Right cardiac atrium (tissue), 5 donors: ENCODE measurements at regions of chr3 and their contacts with region 1.

Region 1: GRCh38 chr3:191388823-191389222 is 58.5 kb upstream of the UTS2B start:
- DNase-seq: no peak
- ATAC-seq: no peak
- H3K4me3 ChIP-seq: no peak overlapping the region
- H3K27ac ChIP-seq: no peak overlapping the region
- H3K4me1 ChIP-seq: no peaks in the 10 kb centered on the region
- H3K27me3 ChIP-seq: no peaks in the 10 kb centered on the region

Region 2: DNA sequence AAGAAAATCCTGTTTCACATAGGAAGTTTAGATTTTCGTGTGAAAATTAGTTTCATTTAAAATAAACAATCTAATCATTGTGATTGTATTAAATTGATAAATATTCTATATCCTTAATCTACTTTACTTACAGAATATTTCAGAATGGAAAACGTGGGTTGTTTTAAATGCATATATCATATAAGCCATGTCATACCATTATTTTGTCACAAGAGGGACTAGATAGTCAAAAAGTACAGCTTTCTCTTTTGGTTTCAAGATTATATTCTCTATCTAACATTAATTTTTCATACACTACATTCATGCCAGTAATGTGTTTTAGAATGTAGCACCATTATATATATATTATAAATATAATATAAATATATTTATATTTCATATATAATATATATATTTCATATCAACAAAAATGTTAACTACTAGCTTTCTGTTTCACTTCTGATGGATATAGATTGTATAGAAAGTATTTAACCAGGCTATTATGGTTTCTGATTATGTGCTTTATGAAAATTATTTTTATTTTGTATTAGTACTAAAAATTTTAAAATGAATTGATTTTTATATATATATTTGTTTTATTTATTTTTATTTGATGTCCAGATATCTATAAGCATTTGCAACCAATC is 144.5 kb before region 1 on chr3:
- intact Hi-C with region 1: loop called in 2 of 4 experiments (anchors 10 kb)
- DNase-seq: no peak
- ATAC-seq: no peak
- H3K4me3 ChIP-seq: no peak overlapping the region
- H3K27ac ChIP-seq: no peak overlapping the region
- H3K4me1 ChIP-seq: no peaks in the 10 kb centered on the region
- H3K27me3 ChIP-seq: no peaks in the 10 kb centered on the region

Region 3: DNA sequence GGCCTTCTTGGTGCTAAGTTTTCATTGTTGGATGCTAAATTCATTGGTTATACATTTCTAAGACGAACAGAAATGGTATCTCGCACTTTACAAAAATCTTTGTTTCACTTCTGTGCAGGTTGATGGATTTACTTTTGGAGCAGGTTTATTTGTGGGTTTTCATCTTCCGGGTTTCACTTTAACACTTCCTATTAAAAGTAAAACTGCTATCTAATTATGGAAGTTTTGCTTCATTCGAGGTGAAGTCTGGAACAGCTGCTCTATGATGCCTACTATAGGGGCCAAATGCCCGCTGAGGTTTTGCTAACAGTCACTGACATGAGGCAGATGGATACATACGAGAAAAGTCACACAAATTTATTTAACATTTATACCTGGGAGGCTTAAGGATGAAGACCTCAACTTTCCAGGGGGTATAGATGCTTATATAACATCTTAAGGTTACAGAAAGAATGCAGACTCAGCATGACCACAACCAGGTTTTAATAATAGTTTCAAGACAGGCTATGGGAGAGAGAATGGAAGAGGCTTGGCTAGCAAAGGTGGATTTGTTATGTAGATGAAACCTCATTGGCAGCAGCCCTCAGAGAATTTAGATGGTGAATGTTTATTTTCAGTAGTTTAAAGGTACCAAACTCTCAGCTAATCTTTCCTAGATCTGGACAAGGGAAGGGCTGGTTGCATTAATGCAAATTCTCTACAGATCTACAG is 135.6 kb before region 1 on chr3:
- intact Hi-C with region 1: loop called in 3 of 4 experiments (anchors 10 kb)
- DNase-seq: no peak
- ATAC-seq: no peak
- H3K4me3 ChIP-seq: no peak overlapping the region
- H3K27ac ChIP-seq: no peak overlapping the region
- H3K4me1 ChIP-seq: no peaks in the 10 kb centered on the region
- H3K27me3 ChIP-seq: no peaks in the 10 kb centered on the region

Region 4: GRCh38 chr3:191269289-191270085 is 119.3 kb before region 1 on chr3:
- intact Hi-C with region 1: loop called in 1 of 4 experiments (anchors 10 kb)
- DNase-seq: no peak
- ATAC-seq: no peak
- H3K4me3 ChIP-seq: no peak overlapping the region
- H3K27ac ChIP-seq: no peak overlapping the region
- H3K4me1 ChIP-seq: no peaks in the 10 kb centered on the region
- H3K27me3 ChIP-seq: no peaks in the 10 kb centered on the region

Region 5: DNA sequence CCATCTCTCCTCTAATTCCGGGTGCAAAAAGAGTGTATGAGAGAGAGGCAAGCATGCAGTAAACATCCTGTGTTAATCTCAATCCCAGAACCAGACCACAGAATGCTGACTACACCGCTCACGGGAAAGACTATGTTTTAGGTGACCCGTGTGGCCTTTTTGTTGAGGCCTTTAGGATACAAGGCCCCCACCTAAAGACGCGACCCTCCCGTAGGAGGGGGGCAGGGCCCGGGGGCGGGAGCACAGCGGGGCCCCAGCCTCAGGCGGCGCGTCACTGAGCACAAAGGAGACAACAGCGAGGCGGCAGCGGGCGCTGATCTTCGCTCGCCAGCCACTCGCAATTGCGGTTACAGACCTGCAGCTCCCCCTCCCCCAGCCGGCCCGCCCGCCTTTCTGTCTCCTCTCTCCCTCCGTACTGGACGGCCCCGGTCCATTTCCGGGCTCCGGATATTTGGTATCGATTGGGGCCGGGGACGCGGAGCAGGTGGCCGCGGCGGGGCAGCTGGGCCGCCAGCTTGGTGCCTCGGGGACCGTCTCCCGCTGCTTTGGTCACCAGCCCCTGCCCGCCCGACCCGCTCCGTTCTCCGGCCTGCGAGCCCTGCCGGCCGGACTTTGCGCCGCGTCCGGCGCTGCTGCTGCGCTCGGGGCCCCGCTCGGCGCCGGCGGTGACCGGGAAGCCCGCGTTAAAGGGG is 59.7 kb before region 1 on chr3 and contains the start of gene CCDC50:
- intact Hi-C with region 1: loop called in 1 of 4 experiments (anchors 10 kb)
- DNase-seq: peak; percentile 88 to 95 (median 95)
- ATAC-seq: peak; percentile 86 to 87
- H3K4me3 ChIP-seq: peak within 1 kb of the TSS; percentile 61
- H3K27ac ChIP-seq: peak within 1 kb of the TSS; percentile 72
- H3K4me1 ChIP-seq: peaks cover 7% of the 10 kb centered on the region
- H3K27me3 ChIP-seq: no peaks in the 10 kb centered on the region
- total RNA-seq, gene CCDC50: 47.6 to 67.5 (median 51.3) TPM